ENCODE measurements at regions of chrX and their contacts with region 1.

Region 1: GRCh38 chrX:68828740-68829552 is at the start of gene EFNB1:
- DNase-seq: peak; percentile 42
- ATAC-seq: peak; percentile 94
- H3K4me3 ChIP-seq: peak within 1 kb of the TSS; percentile 57
- H3K27ac ChIP-seq: no peak within 1 kb of the TSS
- H3K4me1 ChIP-seq: no peaks in the 10 kb centered on the region
- H3K27me3 ChIP-seq: peaks cover 0 to 1% of the 10 kb centered on the region in 2 experiments; a peak in 2 of 4 replicates
- CTCF ChIP-seq: no peak
- EP300 ChIP-seq: no peak
- POLR2A ChIP-seq: peak; percentile 68
- RAD21 ChIP-seq: no peak
- polyA plus RNA-seq, gene EFNB1: 0.02 TPM in 1 of 2 experiments, not detected in the other

Region 2: DNA sequence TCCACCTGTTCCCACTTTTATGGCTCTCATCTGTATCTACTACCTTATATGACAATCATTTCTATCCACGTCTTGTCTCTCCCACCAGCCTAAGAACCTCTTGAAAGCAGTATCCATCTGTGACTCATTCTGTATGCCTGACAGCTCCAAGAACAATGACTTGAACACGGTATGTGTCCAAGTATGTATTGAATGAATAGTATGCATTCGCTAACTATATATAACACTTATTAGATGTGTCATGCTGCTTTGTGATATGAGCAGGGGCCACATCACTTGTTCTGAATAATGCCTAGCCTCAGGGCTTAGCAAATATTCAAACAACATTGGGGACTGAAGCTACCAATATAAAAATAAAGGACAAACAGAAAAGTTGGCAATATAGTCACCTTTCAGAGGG is 400.5 kb before region 1 on chrX:
- CTCF ChIA-PET with region 1: no interaction called
- POLR2A ChIA-PET with region 1: no interaction called
- RAD21 ChIA-PET with region 1: no interaction called
- SMC1A ChIA-PET with region 1: no interaction called
- in situ Hi-C with region 1: no loop called
- intact Hi-C with region 1: no loop called
- DNase-seq: no peak
- ATAC-seq: no peak
- H3K4me3 ChIP-seq: no peak overlapping the region
- H3K27ac ChIP-seq: no peak overlapping the region
- H3K4me1 ChIP-seq: no peaks in the 10 kb centered on the region
- H3K27me3 ChIP-seq: no peaks in the 10 kb centered on the region; a peak in 1 of 4 replicates
- CTCF ChIP-seq: no peak
- EP300 ChIP-seq: no peak
- POLR2A ChIP-seq: no peak
- RAD21 ChIP-seq: no peak

Region 3: DNA sequence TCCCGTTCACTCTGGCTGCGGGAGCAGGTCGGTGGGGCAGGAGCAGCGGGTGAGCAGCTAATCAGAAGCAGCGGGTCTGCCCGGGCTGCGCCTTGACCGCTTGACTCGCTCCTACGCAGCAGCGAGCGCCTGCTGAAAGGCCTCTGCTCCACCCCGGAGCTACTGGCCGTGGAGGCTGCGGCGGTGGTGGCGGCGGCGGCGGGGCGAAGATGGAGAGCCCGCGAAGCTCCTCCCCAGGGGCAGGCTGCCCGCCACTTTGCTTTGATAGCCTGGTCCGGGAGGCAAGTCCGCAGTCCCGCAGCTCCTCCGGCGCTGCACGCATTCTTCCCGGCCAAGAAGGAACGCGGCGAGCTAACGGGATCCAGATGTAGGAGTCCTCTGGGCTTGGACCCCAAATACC is 299.6 kb after region 1 on chrX:
- CTCF ChIA-PET with region 1: interaction called, 3 read pairs
- POLR2A ChIA-PET with region 1: no interaction called
- RAD21 ChIA-PET with region 1: no interaction called
- SMC1A ChIA-PET with region 1: no interaction called
- in situ Hi-C with region 1: no loop called
- intact Hi-C with region 1: loop called (anchors 10 kb)
- DNase-seq: no peak
- ATAC-seq: no peak
- H3K4me3 ChIP-seq: no peak overlapping the region
- H3K27ac ChIP-seq: no peak overlapping the region
- H3K4me1 ChIP-seq: no peaks in the 10 kb centered on the region
- H3K27me3 ChIP-seq: peaks cover 0 to 2% of the 10 kb centered on the region in 2 experiments; a peak in 2 of 4 replicates
- CTCF ChIP-seq: no peak
- EP300 ChIP-seq: no peak
- POLR2A ChIP-seq: no peak
- RAD21 ChIP-seq: no peak

Region 4: DNA sequence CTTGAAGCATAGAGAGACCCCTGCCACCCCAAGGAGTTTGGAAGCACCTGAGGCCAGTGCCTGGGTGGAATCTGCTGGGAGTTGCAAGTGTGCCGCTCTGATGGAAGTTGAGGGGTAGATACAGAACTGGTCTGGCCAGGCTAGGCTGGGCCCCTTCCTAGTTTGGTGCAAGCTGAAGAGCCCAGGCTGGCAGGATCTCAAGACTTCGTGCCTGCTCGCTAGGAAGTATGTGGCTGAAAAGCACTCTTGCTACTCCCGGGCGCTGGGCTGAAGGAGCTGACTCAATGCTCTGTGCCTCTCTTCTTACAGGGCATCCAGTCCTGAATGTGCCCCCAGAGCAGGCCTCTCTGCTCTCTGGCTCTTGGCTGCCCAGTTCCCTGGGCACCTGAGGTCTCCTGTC is 388.0 kb after region 1 on chrX:
- CTCF ChIA-PET with region 1: interaction called, 34 read pairs
- POLR2A ChIA-PET with region 1: no interaction called
- RAD21 ChIA-PET with region 1: interaction called, 21 read pairs
- SMC1A ChIA-PET with region 1: interaction called, 10 read pairs
- in situ Hi-C with region 1: loop called (anchors 5 kb)
- intact Hi-C with region 1: loop called (anchors 1 kb)
- DNase-seq: no peak
- ATAC-seq: no peak
- H3K4me3 ChIP-seq: no peak overlapping the region
- H3K27ac ChIP-seq: no peak overlapping the region
- H3K4me1 ChIP-seq: no peaks in the 10 kb centered on the region
- H3K27me3 ChIP-seq: 0 out of 4 replicates have a peak, but pooled peaks cover 0 to 2% of the 10 kb centered on the region in 2 experiments
- CTCF ChIP-seq: no peak
- EP300 ChIP-seq: no peak
- POLR2A ChIP-seq: no peak
- RAD21 ChIP-seq: no peak

Region 5: DNA sequence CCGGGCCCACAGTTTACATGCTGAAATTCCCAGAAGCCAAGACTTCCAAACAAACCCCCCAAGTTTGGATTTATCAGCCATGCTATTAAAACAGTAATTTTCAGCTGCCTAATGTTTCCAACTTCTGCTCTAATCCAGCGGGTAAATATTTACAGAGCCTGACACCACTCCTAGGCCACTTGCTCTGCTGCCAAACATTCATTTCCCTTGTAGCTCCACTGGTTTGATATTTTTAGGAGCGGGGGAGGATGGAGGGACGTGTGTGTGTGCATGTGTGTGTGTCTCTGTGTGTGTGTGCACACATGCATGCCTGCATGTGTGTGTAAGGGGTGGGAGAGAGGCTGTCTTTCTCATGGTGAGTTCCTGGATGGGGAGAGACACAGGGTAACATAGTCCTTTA is 452.0 kb after region 1 on chrX:
- CTCF ChIA-PET with region 1: interaction called, 12 read pairs
- POLR2A ChIA-PET with region 1: no interaction called
- RAD21 ChIA-PET with region 1: interaction called, 10 read pairs
- SMC1A ChIA-PET with region 1: interaction called, 3 read pairs
- in situ Hi-C with region 1: loop called (anchors 5 kb)
- intact Hi-C with region 1: loop called (anchors 1 kb)
- DNase-seq: no peak
- ATAC-seq: no peak
- H3K4me3 ChIP-seq: no peak overlapping the region
- H3K27ac ChIP-seq: no peak overlapping the region
- H3K4me1 ChIP-seq: no peaks in the 10 kb centered on the region
- H3K27me3 ChIP-seq: no peaks in the 10 kb centered on the region
- CTCF ChIP-seq: no peak
- EP300 ChIP-seq: no peak
- POLR2A ChIP-seq: no peak
- RAD21 ChIP-seq: no peak

Region 6: DNA sequence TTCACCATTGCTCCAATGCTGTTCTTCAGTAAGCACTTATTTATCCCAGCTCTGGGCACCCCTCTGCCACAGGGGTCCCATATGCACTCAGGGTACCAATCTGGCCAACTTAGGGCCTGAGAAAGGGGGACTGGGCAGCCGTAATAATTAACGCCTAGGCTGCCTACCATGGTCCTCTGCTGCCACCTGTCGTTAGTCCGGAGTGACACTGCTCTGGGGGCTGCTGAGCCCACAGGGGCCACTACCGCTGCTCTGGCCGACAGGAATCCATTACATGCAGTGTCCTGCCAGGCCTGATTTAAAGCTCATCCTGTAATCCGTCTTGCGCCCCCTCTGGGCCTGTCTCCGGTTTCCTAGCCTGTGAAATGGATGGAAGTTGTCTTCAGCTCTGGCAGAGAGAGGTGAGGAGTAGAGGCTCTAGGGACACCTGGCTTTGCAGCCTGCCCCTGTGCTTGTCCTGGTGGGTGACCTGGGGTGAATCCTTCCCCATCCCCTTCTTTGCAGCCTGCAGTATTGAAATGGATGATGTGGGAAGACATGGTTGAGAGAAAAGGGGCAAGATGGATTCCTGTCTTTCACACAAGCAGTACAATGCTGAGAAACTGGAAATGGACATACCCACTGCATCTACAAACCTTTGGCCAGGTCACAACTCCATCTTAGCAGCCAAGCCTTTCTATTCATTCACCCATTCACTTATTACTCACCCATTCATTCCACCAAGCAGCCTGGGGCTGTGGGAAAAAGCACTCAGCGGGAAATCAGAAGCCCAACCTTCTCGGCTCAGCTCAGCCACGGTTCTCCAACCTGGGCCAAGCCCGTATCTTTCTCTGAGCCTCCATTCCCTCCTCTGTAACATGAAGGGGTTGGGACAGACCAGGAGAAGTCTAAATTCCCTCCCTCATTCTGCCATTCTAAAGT is 558.9 kb after region 1 on chrX:
- CTCF ChIA-PET with region 1: interaction called, 26 read pairs
- POLR2A ChIA-PET with region 1: no interaction called
- RAD21 ChIA-PET with region 1: interaction called, 17 read pairs
- SMC1A ChIA-PET with region 1: interaction called, 4 read pairs
- in situ Hi-C with region 1: loop called (anchors 10 kb)
- intact Hi-C with region 1: loop called (anchors 5 kb)
- DNase-seq: no peak
- ATAC-seq: peak; percentile 93
- H3K4me3 ChIP-seq: no peak overlapping the region
- H3K27ac ChIP-seq: no peak overlapping the region
- H3K4me1 ChIP-seq: no peaks in the 10 kb centered on the region
- H3K27me3 ChIP-seq: no peaks in the 10 kb centered on the region
- CTCF ChIP-seq: peak; percentile 72 to 79 (median 74)
- EP300 ChIP-seq: no peak
- POLR2A ChIP-seq: no peak
- RAD21 ChIP-seq: peak; percentile 72

Measured in GM12878 (cell line).